Activated CD8-positive, alpha-beta T cell treated with anti-CD3 and anti-CD28 coated beads for 36 hours (primary cell): ENCODE measurements at regions of chr2 and their contacts with region 1.

Region 1: GRCh38 chr2:88753833-88754584 is 62.5 kb downstream of the RPIA start:
- DNase-seq: peak; percentile 57
- ATAC-seq: peak; percentile 92
- H3K4me3 Mint-ChIP-seq: no peak overlapping the region
- H3K27ac Mint-ChIP-seq: peak overlapping the region; percentile 94
- H3K4me1 Mint-ChIP-seq: peaks cover 46% of the 10 kb centered on the region
- H3K27me3 Mint-ChIP-seq: no peaks in the 10 kb centered on the region
- CTCF ChIP-seq: no peak

Region 2: DNA sequence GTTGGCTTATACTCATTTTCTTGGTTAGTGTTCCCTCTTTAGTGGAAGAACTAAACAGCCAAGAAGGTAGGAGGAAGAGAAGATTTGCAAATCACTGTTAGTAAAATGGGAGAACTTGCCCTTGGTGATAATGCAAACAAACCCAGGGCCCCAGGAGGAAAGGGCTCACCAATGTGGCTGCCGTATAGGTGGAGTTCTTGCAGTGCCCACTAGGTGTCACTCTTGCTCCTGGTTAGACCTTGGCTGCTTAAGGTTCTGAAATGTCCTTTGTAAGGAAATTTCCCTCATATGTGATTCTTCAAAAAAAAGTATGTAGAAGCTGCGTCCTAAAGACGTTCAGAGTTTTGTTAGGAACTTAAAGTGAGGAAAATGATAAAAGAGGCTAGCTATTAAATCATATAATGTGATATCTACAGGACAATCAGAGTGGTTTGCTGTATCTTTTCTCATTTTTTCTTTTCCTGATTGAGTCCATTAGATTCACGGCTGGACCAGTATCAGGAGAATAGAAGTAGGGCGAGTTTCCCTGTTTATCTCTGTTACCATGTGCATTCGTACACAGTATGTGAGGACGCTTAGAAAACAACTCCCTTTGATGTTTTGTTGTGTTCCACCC is 13.9 kb before region 1 on chr2:
- CTCF ChIA-PET with region 1: interaction called, 62 read pairs
- POLR2A ChIA-PET with region 1: interaction called, 4 read pairs
- intact Hi-C with region 1: no loop called
- DNase-seq: peak; percentile 81
- ATAC-seq: peak; percentile 93
- H3K4me3 Mint-ChIP-seq: no peak overlapping the region
- H3K27ac Mint-ChIP-seq: no peak overlapping the region
- H3K4me1 Mint-ChIP-seq: peaks cover 25% of the 10 kb centered on the region
- H3K27me3 Mint-ChIP-seq: no peaks in the 10 kb centered on the region
- CTCF ChIP-seq: peak; percentile 94

Region 3: GRCh38 chr2:88831792-88832248 is 77.8 kb after region 1 on chr2:
- CTCF ChIA-PET with region 1: interaction called, 10 read pairs
- POLR2A ChIA-PET with region 1: no interaction called
- intact Hi-C with region 1: no loop called
- DNase-seq: peak; percentile 76
- ATAC-seq: peak; percentile 74
- H3K4me3 Mint-ChIP-seq: no peak overlapping the region
- H3K27ac Mint-ChIP-seq: no peak overlapping the region
- H3K4me1 Mint-ChIP-seq: no peaks in the 10 kb centered on the region
- H3K27me3 Mint-ChIP-seq: peaks cover 8% of the 10 kb centered on the region
- CTCF ChIP-seq: peak; percentile 74

Region 4: DNA sequence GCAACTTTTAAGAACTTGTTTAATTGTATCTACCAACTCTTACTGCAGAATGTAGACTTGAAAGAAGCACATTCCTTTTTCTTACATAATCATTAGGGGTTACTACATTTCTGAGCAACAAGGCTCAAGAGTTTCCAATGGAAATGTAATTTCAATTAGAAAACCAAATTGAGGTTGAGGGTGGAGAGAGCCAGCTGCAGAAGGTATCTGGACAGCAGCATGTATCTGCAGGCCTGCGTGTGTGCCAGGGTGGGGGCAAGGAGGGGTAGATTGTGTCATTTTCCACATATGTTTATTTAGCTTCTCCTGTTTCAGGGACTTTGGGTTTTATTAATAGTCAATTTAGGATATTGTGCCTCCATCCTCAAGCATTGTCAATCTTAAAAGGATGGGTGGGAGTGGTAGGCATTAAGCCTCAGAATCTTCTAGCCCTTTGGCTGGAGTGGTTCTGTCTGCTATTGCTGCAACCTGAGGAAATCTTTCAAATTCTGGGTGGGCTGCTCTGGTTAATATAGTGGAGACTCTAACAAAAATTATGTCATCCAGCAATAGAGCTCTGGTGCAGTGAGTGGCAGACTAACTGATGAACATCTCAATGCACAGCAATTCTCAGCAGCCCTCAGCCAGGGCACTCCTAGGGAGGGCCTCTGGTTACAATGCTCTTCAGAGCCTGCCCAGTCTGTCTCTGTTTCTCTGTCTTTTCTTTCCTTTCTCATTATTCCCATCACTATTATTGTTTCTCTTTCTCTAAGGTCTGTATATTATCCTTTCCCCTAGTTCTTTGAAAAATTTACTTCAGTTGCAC is 88.8 kb after region 1 on chr2:
- CTCF ChIA-PET with region 1: no interaction called
- POLR2A ChIA-PET with region 1: no interaction called
- intact Hi-C with region 1: no loop called
- DNase-seq: no peak
- ATAC-seq: no peak
- H3K4me3 Mint-ChIP-seq: no peak overlapping the region
- H3K27ac Mint-ChIP-seq: no peak overlapping the region
- H3K4me1 Mint-ChIP-seq: peaks cover 4% of the 10 kb centered on the region
- H3K27me3 Mint-ChIP-seq: no peaks in the 10 kb centered on the region
- CTCF ChIP-seq: no peak